ENCODE measurements at regions of chr11 and their contacts with region 1.

Region 1: DNA sequence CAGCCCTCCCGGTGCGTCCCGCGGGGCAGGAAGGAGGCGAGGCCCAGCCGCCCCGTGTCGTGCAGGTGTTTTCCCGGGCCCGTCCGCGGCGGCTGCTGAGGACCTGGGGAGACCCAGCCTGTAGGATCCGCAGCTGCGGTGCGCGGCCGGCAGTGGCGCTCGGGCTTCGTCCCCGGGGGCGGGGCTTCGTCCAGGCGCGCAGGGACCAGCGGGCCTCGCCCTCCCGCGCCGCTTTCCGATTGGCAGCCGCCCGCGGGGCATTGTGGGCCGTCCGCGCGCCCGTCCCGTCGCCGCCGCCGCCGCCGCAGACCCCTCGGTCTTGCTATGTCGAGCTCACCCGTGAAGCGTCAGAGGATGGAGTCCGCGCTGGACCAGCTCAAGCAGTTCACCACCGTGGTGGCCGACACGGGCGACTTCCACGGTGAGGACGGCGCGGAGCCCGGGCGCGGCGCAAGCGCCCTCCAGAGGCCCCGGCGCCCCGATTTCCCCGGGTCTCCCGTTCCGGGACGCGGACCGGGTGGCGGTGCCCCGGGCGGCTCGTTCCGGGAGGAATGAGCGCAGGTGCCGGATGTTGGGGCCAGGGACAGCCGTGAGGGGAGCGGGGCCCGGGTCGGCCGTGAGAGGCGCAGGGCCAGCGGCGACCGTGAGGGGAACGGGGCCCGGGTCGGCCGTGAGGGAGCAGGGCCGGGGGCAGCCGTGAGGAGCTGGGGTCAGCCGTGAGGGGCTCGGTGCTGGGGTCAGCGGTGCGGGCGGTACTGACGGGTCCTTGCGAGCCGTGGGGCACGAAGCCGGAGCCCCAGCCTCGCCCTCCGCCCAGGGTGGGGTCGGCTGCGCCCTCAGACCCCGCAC is at the start of gene TALDO1:
- DNase-seq: peak; percentile 88
- H3K4me3 Mint-ChIP-seq: peak within 1 kb of the TSS; percentile 82
- H3K27ac Mint-ChIP-seq: peak within 1 kb of the TSS; percentile 63
- H3K4me1 Mint-ChIP-seq: peaks cover 4% of the 10 kb centered on the region
- H3K27me3 Mint-ChIP-seq: no peaks in the 10 kb centered on the region
- CTCF ChIP-seq: peak; percentile 15
- total RNA-seq, gene TALDO1: 93.8 and 137 TPM in 2 replicates

Region 2: DNA sequence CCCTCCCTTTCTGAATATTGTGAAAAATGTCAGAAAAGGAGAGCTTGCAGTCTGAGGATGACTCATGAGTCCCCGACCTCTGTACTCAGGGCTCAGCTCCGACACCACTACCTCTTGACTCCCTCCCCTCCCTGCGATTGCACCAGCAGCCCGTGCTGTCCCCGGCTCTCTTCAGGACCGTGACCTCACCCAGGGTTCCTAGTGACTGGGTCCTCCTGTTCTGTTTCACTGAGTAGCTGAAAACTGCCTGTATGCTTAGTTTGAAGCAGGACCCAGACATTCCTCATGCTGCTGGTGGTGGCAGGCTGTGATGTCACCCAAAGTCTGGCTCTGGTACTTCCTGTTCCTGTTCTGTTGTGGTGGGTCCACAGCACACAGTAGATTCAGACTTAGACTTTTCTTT is 159.4 kb before region 1 on chr11:
- CTCF ChIA-PET with region 1: no interaction called
- POLR2A ChIA-PET with region 1: no interaction called
- intact Hi-C with region 1: no loop called
- DNase-seq: peak; percentile 73
- H3K4me3 Mint-ChIP-seq: no peak overlapping the region
- H3K27ac Mint-ChIP-seq: no peak overlapping the region
- H3K4me1 Mint-ChIP-seq: no peaks in the 10 kb centered on the region
- H3K27me3 Mint-ChIP-seq: no peaks in the 10 kb centered on the region
- CTCF ChIP-seq: no peak

Region 3: GRCh38 chr11:680476-680875 is 66.9 kb before region 1 on chr11:
- CTCF ChIA-PET with region 1: no interaction called
- POLR2A ChIA-PET with region 1: no interaction called
- intact Hi-C with region 1: no loop called
- DNase-seq: no peak
- H3K4me3 Mint-ChIP-seq: no peak overlapping the region
- H3K27ac Mint-ChIP-seq: no peak overlapping the region
- H3K4me1 Mint-ChIP-seq: no peaks in the 10 kb centered on the region
- H3K27me3 Mint-ChIP-seq: no peaks in the 10 kb centered on the region
- CTCF ChIP-seq: no peak

Region 4: GRCh38 chr11:695538-696248 is 51.7 kb before region 1 on chr11 and contains the start of gene TMEM80:
- CTCF ChIA-PET with region 1: interaction called, 6 read pairs
- POLR2A ChIA-PET with region 1: interaction called, 64 read pairs
- intact Hi-C with region 1: no loop called
- DNase-seq: peak; percentile 99
- H3K4me3 Mint-ChIP-seq: peak within 1 kb of the TSS; percentile 81
- H3K27ac Mint-ChIP-seq: peak within 1 kb of the TSS; percentile 98
- H3K4me1 Mint-ChIP-seq: peaks cover 33% of the 10 kb centered on the region
- H3K27me3 Mint-ChIP-seq: no peaks in the 10 kb centered on the region
- CTCF ChIP-seq: no peak
- total RNA-seq, gene TMEM80: 12.2 and 12.8 TPM in 2 replicates

Region 5: DNA sequence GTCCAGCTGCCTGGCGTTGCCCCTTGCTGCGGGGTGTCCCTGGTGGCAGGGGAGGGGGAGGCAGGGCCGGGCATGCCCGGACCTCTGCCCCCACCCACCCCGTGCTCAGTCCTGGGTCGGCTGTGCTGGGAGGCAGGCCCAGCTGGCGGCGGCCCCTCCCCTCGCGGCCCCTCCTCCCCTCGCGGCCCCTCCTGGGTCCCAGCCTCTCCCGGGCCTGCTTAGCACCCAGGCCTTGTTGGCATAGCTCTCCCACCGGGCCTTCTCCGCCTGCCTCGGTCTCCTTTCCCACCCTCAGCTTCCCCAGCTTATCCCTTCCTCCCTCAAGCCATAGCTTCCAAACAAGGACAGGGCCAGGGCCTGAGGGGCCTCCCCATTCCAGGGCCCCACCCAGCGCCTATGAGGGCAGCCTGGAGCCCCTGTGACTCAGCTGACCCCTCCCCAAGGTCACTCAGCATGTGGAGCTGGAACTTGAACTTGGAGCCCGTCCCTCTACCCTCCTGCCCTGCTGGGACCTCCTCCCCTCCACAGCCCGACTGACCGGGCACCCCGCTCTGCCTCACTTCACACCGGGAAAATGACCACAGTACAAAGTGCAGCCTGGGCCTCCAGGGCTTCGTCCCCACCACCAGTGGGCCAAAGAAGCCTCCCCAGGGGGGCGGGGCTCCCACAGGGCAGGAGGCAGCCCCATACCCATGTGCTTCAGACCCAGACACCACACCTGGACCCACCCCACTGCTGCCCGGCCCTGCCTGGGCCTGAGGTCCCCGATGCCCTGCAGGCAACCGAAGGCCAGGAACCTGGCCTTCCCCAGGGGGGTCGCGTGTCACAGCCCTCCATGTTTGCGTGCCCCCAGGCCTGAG is 40.2 kb before region 1 on chr11:
- CTCF ChIA-PET with region 1: no interaction called
- POLR2A ChIA-PET with region 1: interaction called, 21 read pairs
- intact Hi-C with region 1: no loop called
- DNase-seq: peak; percentile 53
- H3K4me3 Mint-ChIP-seq: peak overlapping the region; percentile 86
- H3K27ac Mint-ChIP-seq: peak overlapping the region; percentile 91
- H3K4me1 Mint-ChIP-seq: peaks cover 25% of the 10 kb centered on the region
- H3K27me3 Mint-ChIP-seq: no peaks in the 10 kb centered on the region
- CTCF ChIP-seq: no peak

Region 6: DNA sequence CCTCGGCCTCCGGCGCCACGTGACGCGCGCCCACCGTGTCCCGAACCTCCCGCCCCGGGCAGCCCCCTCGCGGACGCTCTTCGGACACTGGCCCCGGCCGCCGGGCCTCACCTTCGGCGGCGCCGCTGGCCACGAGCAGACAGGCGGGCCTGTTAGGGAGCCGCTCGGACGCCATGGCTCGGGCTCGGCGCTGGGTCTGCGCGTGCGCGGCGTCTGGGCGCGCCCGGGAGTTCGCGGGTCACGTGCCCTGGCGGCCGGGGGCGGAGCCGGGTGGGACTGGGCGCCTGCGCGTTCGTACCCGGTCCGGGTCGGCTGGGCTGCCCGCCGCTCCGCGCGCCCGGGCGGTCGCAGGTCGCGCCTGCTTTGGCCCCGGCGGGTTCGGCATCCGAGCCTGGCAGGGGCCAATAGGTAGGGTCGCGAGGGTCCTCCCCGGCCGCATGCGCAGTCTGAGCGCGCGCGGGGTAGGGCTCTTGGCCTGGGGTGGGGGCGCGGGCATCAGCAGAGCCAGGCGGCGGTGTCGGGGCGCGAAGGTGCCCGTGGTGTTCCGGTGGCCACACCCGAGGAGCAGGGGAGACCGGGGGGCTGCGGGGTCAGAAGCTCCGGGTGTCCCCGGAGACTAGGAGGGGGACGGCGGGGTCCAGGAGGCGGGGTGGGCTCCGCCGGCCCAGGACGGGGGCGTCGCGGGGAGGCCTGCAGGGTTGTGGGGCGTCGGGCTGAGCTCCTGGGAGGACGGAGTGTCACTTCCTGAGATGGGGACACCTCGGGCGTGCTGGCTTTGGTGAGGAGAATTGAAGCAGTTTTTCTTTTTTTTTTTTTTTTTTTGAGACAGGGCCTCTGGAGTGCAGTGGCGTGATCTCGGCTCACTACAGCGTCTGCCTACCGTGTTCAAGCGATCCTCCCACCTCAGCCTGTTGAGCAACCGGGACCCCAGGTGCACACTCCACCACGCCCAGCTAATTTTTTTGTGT is 30.2 kb after region 1 on chr11 and contains the start of gene GATD1:
- CTCF ChIA-PET with region 1: no interaction called
- POLR2A ChIA-PET with region 1: interaction called, 37 read pairs
- intact Hi-C with region 1: no loop called
- DNase-seq: peak; percentile 84
- H3K4me3 Mint-ChIP-seq: peak within 1 kb of the TSS; percentile 85
- H3K27ac Mint-ChIP-seq: peak within 1 kb of the TSS; percentile 81
- H3K4me1 Mint-ChIP-seq: peaks cover 11% of the 10 kb centered on the region
- H3K27me3 Mint-ChIP-seq: no peaks in the 10 kb centered on the region
- CTCF ChIP-seq: no peak
- total RNA-seq, gene GATD1: 54.6 and 67.7 TPM in 2 replicates